ENCODE measurements at regions of chr3 and their contacts with region 1.

Region 1: DNA sequence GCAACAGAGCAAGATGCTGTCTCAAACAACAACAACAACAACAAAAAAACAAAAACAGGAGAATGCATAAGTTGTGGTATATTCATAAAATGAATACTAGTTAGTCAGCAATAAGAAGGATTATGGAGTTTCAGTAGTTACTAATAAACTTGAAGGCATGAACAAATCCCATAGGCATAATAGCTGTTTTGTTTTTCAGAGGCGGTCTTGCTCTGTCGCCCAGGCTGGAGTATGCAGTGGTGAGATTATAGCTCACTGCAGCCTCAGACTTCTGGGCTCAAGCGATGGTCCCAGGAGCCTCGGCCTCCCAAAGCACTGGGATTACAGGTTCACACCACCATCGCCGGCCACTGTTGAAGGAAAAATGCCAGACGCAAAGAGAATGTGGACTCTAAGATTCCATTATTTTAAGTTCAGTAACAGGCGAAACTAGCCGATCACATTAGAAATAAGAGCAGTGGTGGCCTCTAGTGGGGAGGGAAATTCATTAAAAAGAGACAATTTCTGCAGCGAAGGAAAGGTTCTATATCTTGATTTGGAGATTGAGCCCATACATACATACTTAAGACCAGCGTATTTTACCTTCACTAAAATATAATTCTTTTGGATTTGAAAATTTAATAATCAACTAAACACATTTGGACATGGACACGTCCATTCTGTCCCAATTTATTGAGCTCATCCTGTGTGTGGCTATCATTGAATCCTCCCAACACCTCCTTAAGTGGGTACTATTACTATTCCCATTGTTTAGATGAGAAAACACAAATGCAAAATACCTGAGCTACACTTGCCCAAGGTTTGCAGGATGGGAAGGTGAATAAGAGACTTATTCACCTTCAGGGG is 27.4 kb upstream of the HDAC11 start:
- DNase-seq: peak; percentile 31
- ATAC-seq: peak; percentile 64
- H3K4me3 ChIP-seq: peak overlapping the region in 1 of 2 experiments; percentile 42; a peak in 1 of 4 replicates
- H3K27ac ChIP-seq: peak overlapping the region; percentile 19; the same call in 1 of the 2 replicates
- H3K4me1 ChIP-seq: peaks cover 3 to 21% of the 10 kb centered on the region in 2 experiments; a peak in 2 of 4 replicates
- H3K27me3 ChIP-seq: no peaks in the 10 kb centered on the region
- CTCF ChIP-seq: peak; percentile 55 to 80 (median 69); a peak in 5 of 6 replicates
- POLR2A ChIP-seq: no peak
- RAD21 ChIP-seq: peak; percentile 87

Region 2: DNA sequence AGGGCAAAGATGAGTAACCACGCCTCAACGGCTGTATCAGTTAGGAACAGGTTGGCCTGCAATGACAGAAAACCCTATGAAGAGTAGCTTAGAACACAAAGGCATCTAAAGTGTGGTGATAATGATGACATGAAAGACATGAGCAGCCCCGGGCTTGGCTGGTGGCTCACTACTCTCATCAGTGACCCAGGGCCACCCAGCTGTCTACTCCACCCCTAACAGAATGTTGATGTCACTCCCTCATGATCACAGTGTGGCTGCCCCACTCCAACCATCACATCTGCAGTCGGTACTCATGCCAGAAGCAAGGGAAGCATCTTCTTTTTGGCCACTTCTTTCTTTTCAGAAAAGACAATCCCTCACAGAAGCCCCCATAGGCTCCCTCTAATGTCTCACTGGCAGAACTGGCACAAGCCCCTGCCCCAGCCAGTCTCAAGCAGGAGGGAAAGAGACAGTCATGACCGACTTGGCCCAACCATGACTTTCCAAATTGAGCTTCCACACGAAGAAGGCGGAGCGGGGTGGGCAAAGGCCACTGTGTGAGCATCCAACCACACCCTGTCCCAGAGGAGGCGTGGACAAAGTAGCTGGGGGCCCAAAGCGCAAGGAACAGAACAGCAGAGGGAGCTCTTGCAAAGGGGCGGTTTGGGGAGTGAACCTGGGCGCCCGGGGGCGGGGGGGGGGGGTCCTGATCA is 307.4 kb before region 1 on chr3:
- CTCF ChIA-PET with region 1: interaction called, 14 read pairs
- POLR2A ChIA-PET with region 1: no interaction called
- RAD21 ChIA-PET with region 1: interaction called in 1 of 2 experiments, 9 read pairs
- intact Hi-C with region 1: no loop called
- DNase-seq: peak; percentile 12
- ATAC-seq: peak; percentile 86
- H3K4me3 ChIP-seq: no peak overlapping the region
- H3K27ac ChIP-seq: no peak overlapping the region
- H3K4me1 ChIP-seq: no peaks in the 10 kb centered on the region; a peak in 1 of 4 replicates
- H3K27me3 ChIP-seq: peaks cover 3% of the 10 kb centered on the region
- CTCF ChIP-seq: peak; percentile 41 to 55 (median 51); a peak in 5 of 6 replicates
- POLR2A ChIP-seq: no peak
- RAD21 ChIP-seq: peak; percentile 56

Region 3: DNA sequence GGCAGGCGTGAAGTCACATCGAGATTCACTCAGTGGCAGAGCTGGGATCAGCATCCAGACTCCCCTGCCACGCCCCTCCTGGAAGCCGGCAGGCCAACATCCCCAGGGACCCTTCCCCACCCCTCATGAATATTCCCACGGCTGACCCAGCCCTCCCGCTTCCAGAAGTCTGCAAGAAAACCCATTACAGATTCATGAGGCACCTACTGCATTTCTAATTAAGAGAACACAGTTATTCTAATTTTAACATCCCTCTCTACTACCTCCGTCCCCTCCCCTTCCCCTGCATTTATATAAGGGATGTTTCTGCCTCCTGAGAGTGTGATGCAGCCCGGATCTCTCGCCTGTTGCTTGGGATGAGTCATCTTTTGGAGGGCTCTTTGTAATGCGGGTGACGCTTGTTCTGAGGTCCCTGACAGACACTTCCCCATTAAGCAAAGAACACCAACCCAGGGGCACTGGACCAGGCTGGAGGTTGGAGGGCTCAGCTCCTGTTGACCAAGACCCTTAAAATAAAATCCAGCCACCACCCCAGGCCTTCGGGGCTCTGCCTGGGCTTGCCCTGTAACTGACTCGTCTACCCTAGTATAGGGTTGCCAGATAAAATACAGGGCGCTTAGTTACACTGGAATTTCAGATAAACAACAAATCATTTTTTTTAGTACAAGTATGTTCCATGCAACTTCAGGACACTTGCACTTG is 151.3 kb before region 1 on chr3:
- CTCF ChIA-PET with region 1: no interaction called
- POLR2A ChIA-PET with region 1: no interaction called
- RAD21 ChIA-PET with region 1: no interaction called
- intact Hi-C with region 1: loop called (anchors 5 kb)
- DNase-seq: peak; percentile 12
- ATAC-seq: peak; percentile 68
- H3K4me3 ChIP-seq: no peak overlapping the region
- H3K27ac ChIP-seq: no peak overlapping the region
- H3K4me1 ChIP-seq: peaks cover 8 to 17% of the 10 kb centered on the region in 2 experiments
- H3K27me3 ChIP-seq: no peaks in the 10 kb centered on the region
- CTCF ChIP-seq: no peak
- POLR2A ChIP-seq: no peak
- RAD21 ChIP-seq: no peak

Region 4: DNA sequence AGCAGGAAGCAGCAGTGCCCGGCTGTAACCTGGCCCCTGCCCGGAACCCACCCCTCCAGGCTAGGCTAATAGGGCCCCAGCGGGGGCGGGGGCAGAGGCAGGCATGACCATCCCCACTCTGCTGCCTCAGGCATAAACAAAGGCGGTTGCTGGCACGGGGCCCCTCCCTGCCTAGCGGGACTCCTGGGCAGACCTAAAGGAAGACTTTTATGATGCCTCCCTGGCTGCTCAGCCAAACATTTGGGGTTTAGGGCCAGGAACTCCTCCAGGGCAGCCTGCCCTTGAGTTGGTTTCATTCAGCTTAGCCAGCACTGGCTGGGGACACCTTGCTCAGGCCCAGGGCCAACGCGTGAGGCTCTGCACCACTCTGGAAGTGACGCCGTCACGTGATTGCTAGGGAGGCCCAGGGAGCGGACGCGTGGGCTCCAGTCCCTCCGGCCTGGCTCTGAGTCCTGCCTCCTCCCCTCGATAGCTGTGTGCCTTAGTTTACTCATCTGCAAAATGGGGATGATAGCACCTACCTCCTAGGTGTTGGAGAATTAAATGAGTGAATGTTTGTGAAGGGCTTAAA is 55.1 kb after region 1 on chr3:
- CTCF ChIA-PET with region 1: no interaction called
- POLR2A ChIA-PET with region 1: no interaction called
- RAD21 ChIA-PET with region 1: no interaction called
- intact Hi-C with region 1: no loop called
- DNase-seq: no peak
- ATAC-seq: no peak
- H3K4me3 ChIP-seq: no peak overlapping the region
- H3K27ac ChIP-seq: no peak overlapping the region
- H3K4me1 ChIP-seq: peaks cover 6% of the 10 kb centered on the region in 2 experiments; a peak in 2 of 4 replicates
- H3K27me3 ChIP-seq: no peaks in the 10 kb centered on the region
- CTCF ChIP-seq: no peak
- POLR2A ChIP-seq: no peak
- RAD21 ChIP-seq: no peak

Region 5: DNA sequence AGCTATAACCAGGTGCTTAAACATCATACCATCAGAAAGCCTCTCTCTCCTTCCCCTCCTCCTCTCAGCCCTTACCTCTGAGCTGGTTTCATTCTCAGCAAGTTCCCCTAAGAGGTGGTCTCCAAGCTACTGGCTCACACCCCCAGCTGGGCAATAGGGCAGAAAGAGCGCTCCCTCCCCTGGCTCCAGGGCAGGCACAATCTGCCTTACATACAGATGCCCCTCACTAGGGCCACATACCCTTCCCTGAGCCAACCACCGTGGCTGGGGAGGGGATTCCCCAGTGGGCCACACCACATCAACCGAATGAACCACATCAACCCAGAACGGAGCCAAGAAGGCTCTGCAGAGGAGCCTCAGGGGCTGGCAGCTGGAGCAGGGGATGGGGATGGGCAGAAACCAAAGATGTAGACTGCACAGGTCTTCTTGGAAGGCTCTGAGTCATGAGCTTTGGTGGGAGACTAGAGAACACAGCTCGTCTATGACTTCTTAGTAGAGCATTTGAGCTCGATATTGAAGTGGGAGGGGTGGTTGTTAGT is 91.6 kb after region 1 on chr3:
- CTCF ChIA-PET with region 1: no interaction called
- POLR2A ChIA-PET with region 1: no interaction called
- RAD21 ChIA-PET with region 1: no interaction called
- intact Hi-C with region 1: no loop called
- DNase-seq: no peak
- ATAC-seq: no peak
- H3K4me3 ChIP-seq: no peak overlapping the region
- H3K27ac ChIP-seq: no peak overlapping the region
- H3K4me1 ChIP-seq: peaks cover 4 to 27% of the 10 kb centered on the region in 2 experiments; a peak in 3 of 4 replicates
- H3K27me3 ChIP-seq: no peaks in the 10 kb centered on the region
- CTCF ChIP-seq: no peak
- POLR2A ChIP-seq: no peak
- RAD21 ChIP-seq: no peak

Region 6: GRCh38 chr3:13623099-13623654 is 170.5 kb after region 1 on chr3:
- CTCF ChIA-PET with region 1: no interaction called
- POLR2A ChIA-PET with region 1: no interaction called
- RAD21 ChIA-PET with region 1: no interaction called
- intact Hi-C with region 1: no loop called
- DNase-seq: no peak
- ATAC-seq: no peak
- H3K4me3 ChIP-seq: no peak overlapping the region
- H3K27ac ChIP-seq: no peak overlapping the region
- H3K4me1 ChIP-seq: no peaks in the 10 kb centered on the region
- H3K27me3 ChIP-seq: no peaks in the 10 kb centered on the region
- CTCF ChIP-seq: no peak
- POLR2A ChIP-seq: no peak
- RAD21 ChIP-seq: no peak

Measured in HCT116 (cell line).